Uterus (tissue), 4 donors: ENCODE measurements at regions of chr9 and their contacts with region 1.

Region 1: GRCh38 chr9:109903515-109904138 is 123.6 kb downstream of the PALM2AKAP2 start:
- DNase-seq: peak; percentile 59 to 70
- H3K4me3 ChIP-seq: no peak overlapping the region
- H3K27ac ChIP-seq: no peak overlapping the region
- H3K4me1 ChIP-seq: no peaks in the 10 kb centered on the region
- H3K27me3 ChIP-seq: no peaks in the 10 kb centered on the region
- CTCF ChIP-seq: peak; percentile 80 to 85 (median 82)
- POLR2A ChIP-seq: no peak

Region 2: DNA sequence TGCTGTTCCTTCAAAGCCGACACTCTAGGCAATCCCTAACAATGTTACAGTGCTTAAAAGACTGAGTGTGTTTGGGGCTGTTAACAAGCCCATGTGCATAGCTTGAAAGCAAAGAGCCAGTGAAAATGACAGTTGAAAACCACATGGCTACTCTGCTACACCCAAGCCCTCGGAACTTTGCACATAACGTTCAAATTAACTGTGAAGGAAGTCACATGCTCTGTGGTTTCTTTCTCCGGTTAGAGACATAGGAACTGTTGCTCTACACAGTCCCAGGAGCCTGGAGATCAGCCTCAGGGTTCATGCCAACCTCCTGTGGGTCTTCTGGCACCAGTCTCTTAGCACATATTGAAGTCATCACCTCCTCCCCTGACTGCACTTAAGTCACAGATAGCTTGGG is 253.3 kb after region 1 on chr9:
- intact Hi-C with region 1: loop called (anchors 5 kb)
- DNase-seq: no peak
- H3K4me3 ChIP-seq: no peak overlapping the region
- H3K27ac ChIP-seq: peak overlapping the region in 1 of 2 donors; percentile 32
- H3K4me1 ChIP-seq: peaks cover 0 to 7% of the 10 kb centered on the region in 2 donors
- H3K27me3 ChIP-seq: no peaks in the 10 kb centered on the region
- CTCF ChIP-seq: no peak
- POLR2A ChIP-seq: no peak

Region 3: DNA sequence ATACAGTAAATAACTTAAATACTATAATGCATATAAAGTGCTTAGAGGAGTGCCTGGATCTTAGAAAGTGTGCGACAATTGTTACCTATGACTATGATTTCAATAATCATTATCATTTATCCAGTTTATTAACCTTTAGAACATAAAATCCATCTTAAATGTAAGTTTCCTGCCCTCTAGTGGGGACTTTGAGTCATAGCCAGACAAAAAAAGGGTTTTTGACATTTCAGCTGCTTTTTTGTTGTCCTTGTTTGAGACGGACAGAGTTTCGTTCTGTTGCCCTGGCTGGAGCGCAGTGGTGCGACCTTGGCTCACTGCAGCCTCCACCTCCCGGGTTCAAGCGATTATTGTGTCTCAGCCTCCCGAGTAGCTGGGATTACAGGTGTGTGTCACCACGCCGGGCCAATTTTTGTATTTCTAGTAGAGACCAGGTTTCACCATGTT is 314.1 kb after region 1 on chr9:
- intact Hi-C with region 1: loop called (anchors 10 kb)
- DNase-seq: peak in 1 of 2 donors; percentile 20
- H3K4me3 ChIP-seq: no peak overlapping the region
- H3K27ac ChIP-seq: no peak overlapping the region
- H3K4me1 ChIP-seq: no peaks in the 10 kb centered on the region
- H3K27me3 ChIP-seq: no peaks in the 10 kb centered on the region
- CTCF ChIP-seq: peak; percentile 68 to 82 (median 76)
- POLR2A ChIP-seq: no peak